ENCODE measurements at regions of chr1 and their contacts with region 1.

Region 1: GRCh38 chr1:97243973-97244560 is 522.5 kb downstream of the PTBP2 start:
- DNase-seq: no peak
- ATAC-seq: no peak

Region 2: DNA sequence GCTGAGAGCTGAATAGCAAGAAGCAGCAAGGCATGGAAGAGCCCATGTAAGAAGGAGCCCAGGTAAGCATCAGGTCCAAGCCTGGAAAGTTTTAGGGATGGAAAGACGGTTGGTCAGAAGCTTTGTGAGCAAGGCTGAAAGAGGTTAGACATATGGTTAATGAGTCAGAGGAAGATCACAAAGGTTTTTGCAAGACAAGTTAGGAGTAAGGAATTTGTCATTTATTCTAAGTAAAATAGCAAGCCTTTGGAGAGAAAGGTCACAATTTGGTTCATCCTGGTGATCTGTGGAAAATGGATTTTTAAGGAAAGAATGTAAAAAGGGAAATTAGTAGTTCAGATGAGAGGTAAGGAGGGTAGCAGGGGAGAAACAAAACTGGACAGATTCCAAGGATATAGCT is 570.1 kb after region 1 on chr1:
- intact Hi-C with region 1: loop called in 1 of 2 experiments (anchors 10 kb)
- DNase-seq: no peak
- ATAC-seq: no peak

Region 3: GRCh38 chr1:98053471-98054366 is 809.7 kb after region 1 on chr1:
- intact Hi-C with region 1: loop called in 1 of 2 experiments (anchors 10 kb)
- DNase-seq: peak; percentile 63
- ATAC-seq: peak; percentile 98 to 99